Panc1 (cell line): ENCODE measurements at regions of chr1 and their contacts with region 1.

Region 1: GRCh38 chr1:180778782-180779398 is 133.8 kb upstream of the KIAA1614 start:
- DNase-seq: no peak
- ATAC-seq: no peak; the same call in 1 of the 2 replicates
- H3K4me3 ChIP-seq: no peak overlapping the region
- H3K27ac ChIP-seq: no peak overlapping the region
- H3K4me1 ChIP-seq: no peaks in the 10 kb centered on the region
- H3K27me3 ChIP-seq: no peaks in the 10 kb centered on the region
- CTCF ChIP-seq: peak; percentile 73

Region 2: GRCh38 chr1:180327089-180327488 is 451.8 kb before region 1 on chr1:
- CTCF ChIA-PET with region 1: no interaction called
- POLR2A ChIA-PET with region 1: no interaction called
- in situ Hi-C with region 1: no loop called
- intact Hi-C with region 1: no loop called
- DNase-seq: no peak
- ATAC-seq: no peak
- H3K4me3 ChIP-seq: no peak overlapping the region
- H3K27ac ChIP-seq: no peak overlapping the region
- H3K4me1 ChIP-seq: no peaks in the 10 kb centered on the region
- H3K27me3 ChIP-seq: no peaks in the 10 kb centered on the region
- CTCF ChIP-seq: no peak

Region 3: GRCh38 chr1:180680558-180681144 is 98.2 kb before region 1 on chr1:
- CTCF ChIA-PET with region 1: no interaction called
- POLR2A ChIA-PET with region 1: interaction called, 13 read pairs
- in situ Hi-C with region 1: no loop called
- intact Hi-C with region 1: no loop called
- DNase-seq: no peak
- ATAC-seq: 0 out of 2 replicates have a peak, but pooled peaks have one; percentile 17
- H3K4me3 ChIP-seq: no peak overlapping the region
- H3K27ac ChIP-seq: no peak overlapping the region
- H3K4me1 ChIP-seq: no peaks in the 10 kb centered on the region
- H3K27me3 ChIP-seq: no peaks in the 10 kb centered on the region
- CTCF ChIP-seq: no peak